ENCODE measurements at regions of chr10 and their contacts with region 1.

Region 1: DNA sequence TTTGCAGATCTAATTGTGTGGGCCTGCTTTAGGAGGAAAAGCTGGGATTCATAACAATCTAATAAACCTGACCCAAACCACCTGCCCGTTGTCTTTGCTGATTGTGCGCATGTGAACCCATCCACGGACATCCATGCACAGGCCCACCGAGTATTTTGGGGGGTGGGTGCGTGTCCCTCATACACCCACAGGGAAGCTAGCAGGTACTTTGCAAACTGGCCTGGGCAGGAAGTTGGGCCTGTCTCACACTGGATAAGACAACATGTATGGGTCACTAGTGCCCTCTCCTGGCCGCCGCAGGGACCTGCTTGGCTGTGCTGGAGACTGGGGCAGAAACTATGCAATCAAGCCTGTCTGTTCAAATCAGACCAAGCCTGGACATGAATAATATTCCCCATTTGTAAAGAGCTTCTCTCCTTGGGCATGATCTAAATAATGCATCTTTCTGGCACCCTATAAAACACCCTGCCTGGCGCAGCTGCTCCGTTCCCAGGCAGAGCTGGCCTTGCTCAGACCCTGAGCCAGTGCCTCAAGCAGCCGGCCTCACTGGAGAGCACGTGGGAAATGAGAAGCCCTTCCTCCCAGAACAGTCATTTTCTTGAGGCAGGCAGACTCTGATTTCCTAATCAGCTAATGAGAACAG is 15.8 kb downstream of the ECHDC3 start:
- DNase-seq: peak; percentile 95
- H3K4me3 Mint-ChIP-seq: no peak overlapping the region
- H3K27ac Mint-ChIP-seq: no peak overlapping the region
- H3K4me1 Mint-ChIP-seq: peaks cover 5% of the 10 kb centered on the region
- H3K27me3 Mint-ChIP-seq: no peaks in the 10 kb centered on the region

Region 2: DNA sequence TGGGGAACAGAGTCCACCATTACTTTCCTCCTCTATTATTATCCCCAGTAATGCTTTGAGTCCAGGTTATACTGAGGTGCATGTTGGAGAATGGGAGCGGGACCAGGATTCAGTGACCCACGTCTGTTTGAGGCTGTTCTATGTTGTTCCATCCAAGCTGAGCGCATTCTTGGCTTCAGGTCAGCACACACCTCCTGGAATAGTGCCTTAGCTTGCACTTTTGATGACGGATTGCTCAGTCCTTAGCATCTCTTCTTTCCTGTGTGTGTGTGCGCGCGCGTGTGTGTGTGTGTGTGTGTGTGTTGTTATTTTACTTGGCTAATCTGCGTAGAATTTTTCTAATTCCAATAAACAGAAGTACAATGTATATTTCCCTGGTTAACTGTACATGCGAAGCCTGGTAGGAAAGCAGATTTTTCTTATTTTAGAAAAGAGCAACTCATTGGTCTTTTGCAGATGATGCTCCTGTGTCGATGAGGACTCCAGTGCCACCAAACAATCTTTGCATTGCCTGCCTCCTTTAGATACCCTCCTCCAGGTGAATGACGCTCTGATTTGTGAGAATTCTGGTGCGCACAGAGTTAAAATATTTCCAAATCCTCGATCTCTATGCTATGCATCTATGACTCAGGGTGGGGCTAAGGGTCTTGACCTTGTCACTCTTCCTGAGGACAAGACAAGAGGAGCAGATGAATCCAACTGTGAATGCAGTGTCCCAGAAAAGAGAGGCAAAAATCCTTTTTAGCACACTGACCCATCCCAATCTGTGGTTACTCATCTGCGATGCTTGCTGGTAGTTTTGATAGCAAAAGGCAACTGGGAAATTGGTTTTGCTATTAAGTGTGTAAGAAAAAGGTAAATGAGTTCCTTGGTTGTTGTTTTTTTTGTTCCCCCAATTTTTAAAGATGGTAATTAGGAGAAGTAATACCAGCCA is 753.5 kb before region 1 on chr10:
- CTCF ChIA-PET with region 1: no interaction called
- intact Hi-C with region 1: no loop called
- DNase-seq: no peak
- H3K4me3 Mint-ChIP-seq: no peak overlapping the region
- H3K27ac Mint-ChIP-seq: no peak overlapping the region
- H3K4me1 Mint-ChIP-seq: peaks cover 6% of the 10 kb centered on the region
- H3K27me3 Mint-ChIP-seq: peaks cover 21% of the 10 kb centered on the region

Region 3: GRCh38 chr10:11505639-11506038 is 252.3 kb before region 1 on chr10:
- CTCF ChIA-PET with region 1: interaction called, 22 read pairs
- intact Hi-C with region 1: no loop called
- DNase-seq: peak; percentile 71
- H3K4me3 Mint-ChIP-seq: no peak overlapping the region
- H3K27ac Mint-ChIP-seq: peak overlapping the region; percentile 60
- H3K4me1 Mint-ChIP-seq: peaks cover 18% of the 10 kb centered on the region
- H3K27me3 Mint-ChIP-seq: no peaks in the 10 kb centered on the region

Region 4: DNA sequence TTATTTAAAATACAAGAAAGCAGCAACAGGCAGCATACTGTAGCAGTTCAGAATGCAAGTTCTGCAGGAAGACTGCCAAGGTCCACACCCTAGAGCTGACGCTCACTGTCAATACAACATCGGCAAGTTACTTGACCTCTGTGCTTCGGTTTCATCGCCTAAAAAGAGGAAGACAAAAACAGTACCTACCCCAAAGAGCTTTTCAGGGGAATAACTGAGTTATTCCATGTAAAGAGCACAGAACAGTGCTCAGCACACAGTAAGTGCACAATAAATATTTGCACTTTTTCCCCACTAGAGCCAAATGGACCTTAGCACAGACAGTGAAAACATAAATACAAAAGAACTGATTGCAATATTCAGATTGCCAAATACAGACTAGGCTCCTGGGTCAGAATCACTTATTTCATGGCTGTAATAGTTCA is 235.1 kb before region 1 on chr10:
- CTCF ChIA-PET with region 1: interaction called, 11 read pairs
- intact Hi-C with region 1: no loop called
- DNase-seq: no peak
- H3K4me3 Mint-ChIP-seq: no peak overlapping the region
- H3K27ac Mint-ChIP-seq: no peak overlapping the region
- H3K4me1 Mint-ChIP-seq: peaks cover 5% of the 10 kb centered on the region
- H3K27me3 Mint-ChIP-seq: no peaks in the 10 kb centered on the region

Region 5: DNA sequence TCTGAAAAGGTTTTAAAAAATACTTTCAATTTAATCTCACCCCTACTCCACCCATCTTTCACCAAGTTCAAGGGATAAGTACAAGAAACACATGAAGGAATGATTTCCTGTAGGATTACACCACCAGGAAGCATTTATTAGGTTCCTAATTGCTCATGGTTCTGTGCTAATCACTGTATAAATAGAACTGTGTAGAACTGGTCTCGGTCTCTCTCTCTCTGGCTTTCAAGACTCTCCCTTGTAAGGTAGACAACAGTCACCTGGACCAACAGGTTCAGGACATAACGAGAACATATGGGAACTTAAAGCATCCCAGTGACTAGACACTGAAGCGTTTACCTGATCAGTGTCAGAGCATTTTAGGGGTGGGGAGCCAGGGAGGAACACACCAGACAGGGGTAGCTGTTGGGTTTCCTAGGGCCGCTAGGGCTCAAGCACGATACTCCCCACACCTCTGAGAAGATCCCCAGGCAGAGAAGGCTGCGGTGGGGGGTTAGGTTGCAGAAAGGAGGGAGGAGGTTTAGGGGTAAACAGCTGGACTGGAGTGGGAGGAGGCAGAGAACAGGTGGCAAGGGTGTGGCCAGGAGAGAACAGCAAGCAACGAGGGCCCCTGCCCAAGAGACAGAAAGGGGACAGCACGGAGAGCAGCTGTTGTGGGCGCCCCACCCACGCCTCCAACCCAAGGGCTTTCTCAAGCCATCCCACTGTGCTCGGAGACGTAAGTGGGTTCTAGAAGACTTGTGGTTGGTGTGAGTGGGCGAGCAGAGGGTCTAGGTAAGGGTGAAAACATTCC is 94.0 kb before region 1 on chr10:
- CTCF ChIA-PET with region 1: no interaction called
- intact Hi-C with region 1: no loop called
- DNase-seq: no peak
- H3K4me3 Mint-ChIP-seq: no peak overlapping the region
- H3K27ac Mint-ChIP-seq: no peak overlapping the region
- H3K4me1 Mint-ChIP-seq: peaks cover 8% of the 10 kb centered on the region
- H3K27me3 Mint-ChIP-seq: no peaks in the 10 kb centered on the region

Region 6: GRCh38 chr10:11698691-11699549 is 59.0 kb before region 1 on chr10:
- CTCF ChIA-PET with region 1: interaction called, 4 read pairs
- intact Hi-C with region 1: loop called (anchors 1 kb)
- DNase-seq: no peak
- H3K4me3 Mint-ChIP-seq: no peak overlapping the region
- H3K27ac Mint-ChIP-seq: no peak overlapping the region
- H3K4me1 Mint-ChIP-seq: peaks cover 4% of the 10 kb centered on the region
- H3K27me3 Mint-ChIP-seq: no peaks in the 10 kb centered on the region

Region 7: DNA sequence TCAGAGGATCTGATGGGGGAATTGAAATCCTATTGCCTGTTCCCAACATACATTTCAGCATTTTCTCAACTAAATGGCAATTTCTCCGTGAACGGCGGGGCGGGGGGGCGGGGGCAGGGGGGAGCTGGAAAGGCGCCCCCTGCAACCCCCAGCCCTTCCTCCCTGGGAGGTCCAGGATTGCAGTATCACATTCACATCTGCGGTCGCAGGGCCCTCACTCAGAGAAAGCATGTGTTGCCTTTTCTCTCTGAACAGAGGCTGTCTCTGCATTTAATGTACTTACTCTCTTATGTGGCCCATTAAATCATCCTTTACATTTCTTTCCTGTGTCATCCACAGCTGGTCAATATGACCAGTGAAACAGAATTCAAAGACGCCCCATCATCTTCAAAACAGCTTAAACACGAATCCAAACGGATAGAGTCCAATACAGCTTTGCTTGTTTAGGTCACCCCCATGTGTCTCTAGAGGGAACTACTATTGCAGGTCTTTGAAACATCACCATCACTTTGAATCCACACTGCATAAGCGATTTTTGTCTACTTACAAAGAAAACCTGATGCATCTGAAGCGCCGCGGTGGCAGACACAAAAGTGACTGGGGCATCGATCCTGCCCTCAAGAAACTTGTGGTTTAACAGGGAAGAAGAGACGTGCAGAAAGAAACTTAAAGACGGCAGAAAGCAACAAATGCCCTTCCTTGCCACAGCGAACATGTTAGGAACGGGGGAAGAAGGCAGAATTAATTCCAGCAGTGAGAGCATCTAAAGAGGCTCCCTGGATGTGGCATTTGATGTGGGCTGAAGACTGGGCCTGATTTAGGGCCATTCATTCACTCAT is 32.8 kb before region 1 on chr10:
- CTCF ChIA-PET with region 1: interaction called, 13 read pairs
- intact Hi-C with region 1: loop called (anchors 1 kb)
- DNase-seq: peak; percentile 26
- H3K4me3 Mint-ChIP-seq: no peak overlapping the region
- H3K27ac Mint-ChIP-seq: no peak overlapping the region
- H3K4me1 Mint-ChIP-seq: peaks cover 5% of the 10 kb centered on the region
- H3K27me3 Mint-ChIP-seq: peaks cover 2% of the 10 kb centered on the region

Region 8: DNA sequence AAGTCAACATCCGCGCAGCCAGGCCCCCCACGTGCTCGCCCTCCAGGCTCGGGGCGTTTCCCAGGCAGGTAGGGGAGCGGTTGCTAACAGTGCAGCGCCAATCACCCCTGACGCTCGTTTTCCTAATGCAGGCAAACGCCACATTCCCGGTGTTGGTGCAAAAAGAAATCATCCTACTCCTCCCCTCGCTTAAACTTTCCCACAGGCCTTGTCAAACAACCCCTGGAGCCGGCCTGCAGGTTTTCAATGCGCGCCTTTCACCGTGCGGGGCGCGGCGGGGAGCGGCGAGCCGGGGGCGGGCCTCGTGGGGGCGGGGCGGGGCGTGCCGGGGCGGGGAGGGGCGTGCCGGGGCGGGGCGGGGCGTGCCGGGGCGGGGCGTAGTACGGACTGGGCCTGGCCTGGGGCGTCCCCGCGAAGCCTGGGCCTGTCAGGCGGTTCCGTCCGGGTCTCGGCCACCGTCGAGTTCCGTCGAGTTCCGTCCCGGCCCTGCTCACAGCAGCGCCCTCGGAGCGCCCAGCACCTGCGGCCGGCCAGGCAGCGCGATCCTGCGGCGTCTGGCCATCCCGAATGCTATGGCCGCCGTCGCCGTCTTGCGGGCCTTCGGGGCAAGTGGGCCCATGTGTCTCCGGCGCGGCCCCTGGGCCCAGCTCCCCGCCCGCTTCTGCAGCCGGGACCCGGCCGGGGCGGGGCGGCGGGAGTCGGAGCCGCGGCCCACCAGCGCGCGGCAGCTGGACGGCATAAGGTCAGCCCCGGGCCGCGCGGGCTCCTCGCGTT is 15.8 kb before region 1 on chr10 and contains the start of gene ECHDC3:
- CTCF ChIA-PET with region 1: interaction called, 12 read pairs
- intact Hi-C with region 1: no loop called
- DNase-seq: peak; percentile 56
- H3K4me3 Mint-ChIP-seq: peak within 1 kb of the TSS; percentile 64
- H3K27ac Mint-ChIP-seq: no peak within 1 kb of the TSS
- H3K4me1 Mint-ChIP-seq: peaks cover 10% of the 10 kb centered on the region
- H3K27me3 Mint-ChIP-seq: peaks cover 14% of the 10 kb centered on the region
- total RNA-seq, gene ECHDC3: 1.3 to 1.5 TPM

Measured in activated naive CD4-positive, alpha-beta T cell treated with anti-CD3 and anti-CD28 coated beads for 36 hours (primary cell).